GM10248 (cell line): ENCODE measurements at regions of chr14 and their contacts with region 1.

Region 1: DNA sequence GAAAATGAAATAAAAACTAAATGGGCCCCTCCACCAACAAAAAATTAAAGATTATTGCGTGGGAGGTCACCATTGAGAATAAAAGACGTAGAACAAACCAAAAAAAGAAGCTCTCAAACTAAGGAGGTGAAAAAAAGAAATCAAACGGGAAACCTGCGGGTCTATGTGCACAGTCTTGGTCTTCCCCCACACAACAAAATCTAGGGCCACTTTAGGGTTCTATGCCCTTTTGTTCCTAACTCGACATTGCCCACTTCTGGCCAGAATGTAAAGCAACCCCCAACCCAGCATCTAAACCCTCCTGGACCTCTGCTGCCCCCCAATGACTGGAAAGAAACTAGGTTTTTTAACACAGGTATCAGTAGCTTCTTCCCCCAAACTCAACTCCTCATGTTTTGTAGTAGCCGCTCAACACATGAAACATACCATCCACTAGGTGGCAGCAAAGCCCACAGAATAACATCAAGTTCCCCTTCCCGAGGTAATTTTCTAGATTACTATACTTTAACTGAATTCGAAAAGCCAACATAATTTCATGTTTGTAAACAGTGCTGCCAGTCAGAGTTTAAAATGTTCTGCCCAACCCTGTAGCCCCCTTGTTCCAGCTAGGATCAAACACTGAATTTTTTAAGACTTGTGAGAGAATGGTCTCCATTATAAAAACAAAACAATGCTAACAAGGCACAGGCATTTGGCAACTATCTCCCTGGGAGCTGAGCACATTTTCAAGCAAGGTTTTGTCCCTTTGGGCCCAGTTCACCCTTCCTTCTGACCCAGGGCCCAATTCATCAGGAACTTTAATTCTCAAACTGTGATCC is 18.7 kb downstream of the DAD1 start:
- DNase-seq: peak; percentile 81
- CTCF ChIP-seq: peak; percentile 93

Region 2: DNA sequence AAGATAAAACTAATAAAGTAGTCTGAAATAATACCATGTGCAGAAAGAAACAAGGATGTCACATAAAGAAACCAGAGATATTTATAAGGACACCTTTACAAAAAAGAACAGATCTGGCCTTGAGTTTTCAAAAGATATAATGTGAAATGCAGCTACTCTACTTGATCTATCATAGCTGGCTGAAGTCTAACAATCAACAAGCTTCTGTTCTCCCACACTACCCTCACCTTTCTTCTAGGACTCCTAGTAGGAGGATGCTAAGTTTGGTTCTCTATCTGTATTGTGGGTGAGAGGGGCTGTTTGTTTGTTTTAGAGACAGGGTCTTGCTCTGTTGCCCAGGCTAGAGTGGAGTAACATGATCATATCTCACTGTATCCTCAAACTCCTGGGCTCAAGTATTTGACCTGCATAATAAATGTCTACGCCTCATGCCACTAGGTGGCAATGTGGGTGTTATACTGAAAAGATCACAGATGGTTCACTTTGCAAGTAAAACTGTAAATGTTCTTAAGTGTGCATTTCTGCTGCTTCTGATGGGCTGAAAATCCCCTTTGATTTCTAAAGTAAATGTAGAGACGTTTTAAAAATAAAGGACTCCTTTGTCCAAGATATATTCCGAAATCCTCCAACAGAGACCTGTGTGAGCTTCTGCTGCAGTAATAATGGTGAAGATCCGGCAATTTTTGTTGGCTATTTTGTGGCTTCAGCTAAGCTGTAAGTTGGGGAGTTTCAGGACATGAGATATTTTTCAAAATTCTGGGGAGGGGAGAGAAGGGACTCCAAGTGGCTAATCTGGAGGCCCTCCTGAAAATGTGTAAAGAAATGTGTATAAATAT is 250.6 kb before region 1 on chr14:
- CTCF ChIA-PET with region 1: interaction called, 20 read pairs
- POLR2A ChIA-PET with region 1: no interaction called
- DNase-seq: peak; percentile 52
- CTCF ChIP-seq: peak; percentile 79

Region 3: GRCh38 chr14:22472935-22473854 is 97.1 kb before region 1 on chr14:
- CTCF ChIA-PET with region 1: interaction called, 57 read pairs
- POLR2A ChIA-PET with region 1: no interaction called
- DNase-seq: peak; percentile 71
- CTCF ChIP-seq: peak; percentile 61

Region 4: GRCh38 chr14:22512106-22512814 is 58.1 kb before region 1 on chr14:
- CTCF ChIA-PET with region 1: interaction called, 43 read pairs
- POLR2A ChIA-PET with region 1: no interaction called
- DNase-seq: no peak
- CTCF ChIP-seq: no peak

Region 5: GRCh38 chr14:22598099-22598899 is 28.0 kb after region 1 on chr14 and contains the start of gene ABHD4:
- CTCF ChIA-PET with region 1: interaction called, 191 read pairs
- POLR2A ChIA-PET with region 1: no interaction called
- DNase-seq: peak; percentile 87
- CTCF ChIP-seq: no peak

Region 6: DNA sequence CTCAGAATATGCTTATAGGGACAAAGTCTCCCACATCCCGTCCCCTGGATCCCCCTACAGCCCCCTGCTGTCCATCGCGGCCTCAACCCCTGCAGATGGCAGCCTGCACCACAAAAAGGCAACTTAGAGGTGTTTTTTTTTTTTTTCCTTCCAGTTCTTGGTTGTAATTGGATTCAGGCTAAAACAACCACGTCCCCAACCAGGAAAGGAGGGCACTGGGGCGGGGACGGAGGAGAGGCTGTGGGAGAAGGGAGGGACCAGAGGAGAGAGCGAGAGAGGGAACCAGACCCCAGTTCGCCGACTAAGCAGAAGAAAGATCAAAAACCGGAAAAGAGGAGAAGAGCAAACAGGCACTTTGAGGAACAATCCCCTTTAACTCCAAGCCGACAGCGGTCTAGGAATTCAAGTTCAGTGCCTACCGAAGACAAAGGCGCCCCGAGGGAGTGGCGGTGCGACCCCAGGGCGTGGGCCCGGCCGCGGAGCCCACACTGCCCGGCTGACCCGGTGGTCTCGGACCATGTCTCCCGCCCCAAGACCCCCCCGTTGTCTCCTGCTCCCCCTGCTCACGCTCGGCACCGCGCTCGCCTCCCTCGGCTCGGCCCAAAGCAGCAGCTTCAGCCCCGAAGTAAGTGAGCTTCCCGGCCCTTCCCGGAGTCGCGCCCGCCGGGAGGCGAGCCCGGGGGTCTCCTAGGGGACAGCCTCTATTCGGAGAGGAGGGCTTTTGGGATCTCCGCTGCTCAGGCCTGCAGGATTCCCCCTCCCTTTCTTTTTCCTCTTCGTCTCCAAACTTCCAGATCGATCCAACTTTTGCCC is 266.2 kb after region 1 on chr14 and contains the start of gene MMP14:
- CTCF ChIA-PET with region 1: interaction called, 22 read pairs
- POLR2A ChIA-PET with region 1: no interaction called
- DNase-seq: no peak
- CTCF ChIP-seq: no peak

Region 7: GRCh38 chr14:22986508-22987054 is 416.2 kb after region 1 on chr14:
- CTCF ChIA-PET with region 1: interaction called, 19 read pairs
- POLR2A ChIA-PET with region 1: no interaction called
- DNase-seq: peak; percentile 85
- CTCF ChIP-seq: peak; percentile 93

Region 8: DNA sequence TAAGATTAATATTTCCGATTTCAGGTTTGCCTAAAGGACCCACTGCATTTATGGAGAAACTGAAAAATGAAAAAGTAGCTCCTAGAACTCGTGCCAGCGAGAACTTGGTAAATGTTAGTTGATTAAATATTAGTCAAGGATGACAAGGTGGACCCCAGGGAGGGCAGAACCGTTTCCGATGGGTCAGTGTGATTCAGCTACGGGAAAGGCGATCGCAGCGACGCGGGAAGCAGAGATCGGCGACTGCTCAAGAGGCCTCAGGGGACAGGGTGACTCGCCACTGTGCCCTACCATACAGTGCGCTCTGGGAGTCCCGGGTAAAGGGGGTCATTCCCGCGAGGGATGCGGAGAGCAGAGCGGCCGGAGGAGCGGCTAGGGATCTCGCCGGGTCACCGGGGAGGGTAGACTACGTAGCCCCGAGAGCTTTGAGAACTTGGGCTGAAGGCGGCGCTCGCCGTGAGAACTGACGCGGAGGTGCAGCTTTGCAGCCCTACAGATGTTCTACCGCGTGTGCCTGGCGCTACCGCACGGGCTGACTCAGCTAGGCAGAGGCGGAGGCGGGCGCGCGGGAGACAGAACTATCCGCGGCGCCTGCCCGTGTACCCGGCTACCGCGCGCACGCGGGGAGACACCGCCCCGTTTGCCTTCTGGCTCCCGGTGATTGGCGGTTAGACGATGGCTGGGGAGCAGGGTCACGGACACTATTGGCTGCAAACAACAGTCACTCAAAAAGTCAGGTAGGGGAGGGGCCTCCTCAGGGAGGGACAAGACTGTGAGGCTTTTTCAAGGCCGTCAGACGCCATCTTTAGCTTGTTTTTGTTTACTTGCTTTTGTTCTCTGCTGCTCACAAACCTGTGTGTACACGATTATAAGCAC is 436.4 kb after region 1 on chr14:
- CTCF ChIA-PET with region 1: no interaction called
- POLR2A ChIA-PET with region 1: no interaction called
- DNase-seq: peak; percentile 97
- CTCF ChIP-seq: no peak